ENCODE measurements at regions of chr13 and their contacts with region 1.

Region 1: DNA sequence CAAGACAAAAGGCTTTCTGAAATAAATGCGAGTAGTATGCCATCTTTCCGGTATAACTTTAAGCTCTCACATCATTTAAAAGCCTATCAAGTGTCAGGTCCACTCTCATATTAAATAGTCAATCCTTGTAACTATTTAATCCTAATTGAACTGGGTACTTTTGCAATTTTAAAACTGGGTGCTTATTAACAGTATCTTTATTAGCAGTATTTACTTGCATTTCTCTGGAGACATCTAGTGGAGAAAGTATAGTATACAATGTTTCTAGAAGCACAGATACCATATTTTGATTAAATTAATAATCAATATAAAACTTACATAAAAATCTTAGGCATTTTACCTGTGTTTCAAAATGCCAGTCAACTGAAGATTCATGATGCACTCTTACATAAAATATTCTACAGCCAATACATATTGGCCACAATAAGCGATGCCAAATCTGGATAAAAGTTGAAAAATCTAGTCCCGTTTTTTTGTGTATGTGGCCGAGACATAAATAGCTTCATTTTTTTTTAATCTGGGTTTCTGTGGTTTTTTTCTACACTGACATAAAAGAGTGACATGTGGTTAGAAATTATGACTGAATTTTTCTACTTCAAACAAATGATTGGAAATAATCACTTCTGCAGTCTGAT is 4.3 kb upstream of the POSTN start:
- DNase-seq: no peak
- ATAC-seq: no peak
- H3K4me3 ChIP-seq: no peak overlapping the region
- H3K27ac ChIP-seq: no peak overlapping the region
- H3K4me1 ChIP-seq: no peaks in the 10 kb centered on the region
- H3K27me3 ChIP-seq: no peaks in the 10 kb centered on the region
- CTCF ChIP-seq: peak in 1 of 3 experiments; percentile 15; a peak in 1 of 6 replicates
- EP300 ChIP-seq: no peak
- POLR2A ChIP-seq: no peak
- RAD21 ChIP-seq: peak; percentile 21; the same call in 1 of the 2 replicates

Region 2: GRCh38 chr13:37085606-37086005 is 517.3 kb before region 1 on chr13:
- CTCF ChIA-PET with region 1: no interaction called
- POLR2A ChIA-PET with region 1: no interaction called
- RAD21 ChIA-PET with region 1: no interaction called
- SMC1A ChIA-PET with region 1: no interaction called
- in situ Hi-C with region 1: loop called (anchors 10 kb)
- intact Hi-C with region 1: no loop called
- DNase-seq: no peak
- ATAC-seq: no peak
- H3K4me3 ChIP-seq: no peak overlapping the region
- H3K27ac ChIP-seq: no peak overlapping the region
- H3K4me1 ChIP-seq: no peaks in the 10 kb centered on the region
- H3K27me3 ChIP-seq: no peaks in the 10 kb centered on the region
- CTCF ChIP-seq: no peak
- EP300 ChIP-seq: no peak
- POLR2A ChIP-seq: no peak
- RAD21 ChIP-seq: no peak

Region 3: DNA sequence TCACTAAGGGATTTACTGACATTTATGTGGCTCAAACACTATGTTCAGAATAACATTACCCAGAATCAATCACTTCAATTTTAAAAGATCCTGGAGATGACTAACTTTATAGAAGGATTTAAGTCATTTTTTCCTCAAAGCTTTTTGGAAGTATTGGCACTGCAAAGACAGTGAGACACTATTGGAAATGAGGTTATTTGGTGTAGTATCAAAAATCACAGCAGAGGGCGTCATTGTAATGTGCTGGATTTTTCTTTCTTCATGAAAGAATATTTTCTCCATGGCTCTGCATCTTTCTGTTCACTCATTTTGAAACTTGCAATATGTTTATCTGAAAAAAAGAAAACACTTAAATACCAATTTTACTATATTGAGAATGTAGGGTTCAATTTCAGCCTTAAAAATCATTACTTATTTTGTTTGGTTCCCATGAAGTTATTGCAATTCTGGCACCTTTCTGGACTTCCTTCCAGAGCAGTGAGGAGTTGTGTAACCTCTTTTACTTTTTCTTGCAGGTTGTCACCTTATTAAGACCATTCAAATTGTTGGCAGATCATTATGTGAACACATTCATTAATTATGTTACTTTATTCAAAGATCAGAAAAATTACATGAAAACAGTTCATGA is 493.7 kb before region 1 on chr13:
- CTCF ChIA-PET with region 1: interaction called, 3 read pairs
- POLR2A ChIA-PET with region 1: no interaction called
- RAD21 ChIA-PET with region 1: no interaction called
- SMC1A ChIA-PET with region 1: no interaction called
- in situ Hi-C with region 1: no loop called
- intact Hi-C with region 1: loop called (anchors 5 kb)
- DNase-seq: no peak
- ATAC-seq: no peak
- H3K4me3 ChIP-seq: no peak overlapping the region
- H3K27ac ChIP-seq: no peak overlapping the region
- H3K4me1 ChIP-seq: no peaks in the 10 kb centered on the region
- H3K27me3 ChIP-seq: no peaks in the 10 kb centered on the region; a peak in 1 of 4 replicates
- CTCF ChIP-seq: peak; percentile 23 to 42 (median 41); a peak in 5 of 6 replicates
- EP300 ChIP-seq: no peak
- POLR2A ChIP-seq: no peak
- RAD21 ChIP-seq: peak; percentile 52

Region 4: DNA sequence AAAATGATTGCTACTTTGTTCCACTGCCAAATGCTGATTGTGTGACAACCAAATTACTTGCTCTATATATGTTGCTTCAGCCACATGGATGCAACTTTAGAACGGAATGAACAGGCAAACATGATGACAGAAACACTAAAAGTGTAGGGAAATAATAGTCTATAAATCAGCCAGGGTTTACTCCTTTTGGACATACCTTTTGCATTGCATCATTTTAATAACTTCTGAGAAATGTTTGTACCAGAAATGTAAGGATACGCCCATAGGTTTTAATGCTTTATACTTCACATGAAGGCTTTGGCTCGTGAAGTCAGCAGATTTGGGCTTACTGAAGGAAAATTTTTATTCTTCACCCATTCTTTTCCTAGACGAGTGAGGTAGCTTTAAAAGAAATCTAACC is 145.3 kb before region 1 on chr13:
- CTCF ChIA-PET with region 1: no interaction called
- POLR2A ChIA-PET with region 1: no interaction called
- RAD21 ChIA-PET with region 1: no interaction called
- SMC1A ChIA-PET with region 1: no interaction called
- in situ Hi-C with region 1: no loop called
- intact Hi-C with region 1: no loop called
- DNase-seq: no peak
- ATAC-seq: no peak
- H3K4me3 ChIP-seq: no peak overlapping the region
- H3K27ac ChIP-seq: no peak overlapping the region
- H3K4me1 ChIP-seq: no peaks in the 10 kb centered on the region
- H3K27me3 ChIP-seq: no peaks in the 10 kb centered on the region
- CTCF ChIP-seq: no peak
- EP300 ChIP-seq: no peak
- POLR2A ChIP-seq: no peak
- RAD21 ChIP-seq: no peak

Measured in GM12878 (cell line).